T-cell (primary cell): ENCODE measurements at regions of chr17 and their contacts with region 1.

Region 1: DNA sequence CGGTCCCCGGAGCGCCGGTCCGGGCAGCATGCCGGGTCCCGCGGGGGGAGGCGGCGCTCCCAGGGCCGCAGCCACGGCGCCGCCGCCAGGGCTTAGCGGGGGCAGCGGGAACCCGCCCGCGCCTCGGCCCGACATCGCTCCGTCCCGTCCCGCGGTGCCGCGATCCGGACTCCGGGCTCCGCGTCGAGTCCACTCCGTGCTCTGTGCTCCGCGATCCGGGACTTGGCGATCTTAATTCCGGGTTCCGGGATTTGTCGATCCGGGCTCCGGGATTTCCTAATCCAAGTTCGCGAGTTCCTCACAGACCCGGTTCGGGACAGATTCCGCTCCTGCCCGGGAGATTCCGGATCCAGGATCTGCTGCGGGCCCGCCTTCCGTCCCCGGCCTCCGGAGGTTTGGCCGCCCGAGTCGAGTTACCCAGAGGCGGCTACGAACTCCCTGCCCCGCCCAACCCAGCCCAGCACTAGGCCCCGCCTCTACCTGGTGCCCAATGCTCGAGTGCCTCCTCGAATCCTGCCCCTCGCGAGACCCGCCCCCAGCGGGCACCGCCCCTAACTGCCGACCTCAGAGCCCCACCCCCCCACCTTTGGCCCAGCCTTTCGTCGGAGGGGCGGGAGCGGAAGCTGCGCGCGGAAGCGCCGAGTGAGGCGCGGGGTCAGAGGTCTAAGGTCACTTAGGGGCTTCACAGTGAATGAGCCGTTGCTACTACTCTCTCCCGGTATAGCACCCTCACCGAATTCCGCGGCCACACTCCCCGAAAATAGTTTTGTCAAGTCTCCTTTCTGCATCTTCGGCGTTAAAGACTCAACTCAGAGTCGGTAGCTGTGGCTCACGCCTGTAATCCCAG is at the start of gene SMARCD2:
- DNase-seq: peak; percentile 97 to 100 (median 99)
- ATAC-seq: peak; percentile 88 to 93 (median 91)
- H3K4me3 ChIP-seq: peak within 1 kb of the TSS; percentile 93 to 94
- H3K4me3 Mint-ChIP-seq: peak within 1 kb of the TSS; percentile 92 to 94 (median 94)
- H3K27ac ChIP-seq: peak within 1 kb of the TSS; percentile 94
- H3K27ac Mint-ChIP-seq: peak within 1 kb of the TSS; percentile 92
- H3K4me1 ChIP-seq: peaks cover 30 to 58% of the 10 kb centered on the region in 2 experiments
- H3K4me1 Mint-ChIP-seq: peaks cover 40 to 49% (median 41%) of the 10 kb centered on the region in 3 donors
- H3K27me3 ChIP-seq: no peaks in the 10 kb centered on the region
- H3K27me3 Mint-ChIP-seq: no peaks in the 10 kb centered on the region
- total RNA-seq, gene SMARCD2: 94.9 to 129 (median 121) TPM

Region 2: DNA sequence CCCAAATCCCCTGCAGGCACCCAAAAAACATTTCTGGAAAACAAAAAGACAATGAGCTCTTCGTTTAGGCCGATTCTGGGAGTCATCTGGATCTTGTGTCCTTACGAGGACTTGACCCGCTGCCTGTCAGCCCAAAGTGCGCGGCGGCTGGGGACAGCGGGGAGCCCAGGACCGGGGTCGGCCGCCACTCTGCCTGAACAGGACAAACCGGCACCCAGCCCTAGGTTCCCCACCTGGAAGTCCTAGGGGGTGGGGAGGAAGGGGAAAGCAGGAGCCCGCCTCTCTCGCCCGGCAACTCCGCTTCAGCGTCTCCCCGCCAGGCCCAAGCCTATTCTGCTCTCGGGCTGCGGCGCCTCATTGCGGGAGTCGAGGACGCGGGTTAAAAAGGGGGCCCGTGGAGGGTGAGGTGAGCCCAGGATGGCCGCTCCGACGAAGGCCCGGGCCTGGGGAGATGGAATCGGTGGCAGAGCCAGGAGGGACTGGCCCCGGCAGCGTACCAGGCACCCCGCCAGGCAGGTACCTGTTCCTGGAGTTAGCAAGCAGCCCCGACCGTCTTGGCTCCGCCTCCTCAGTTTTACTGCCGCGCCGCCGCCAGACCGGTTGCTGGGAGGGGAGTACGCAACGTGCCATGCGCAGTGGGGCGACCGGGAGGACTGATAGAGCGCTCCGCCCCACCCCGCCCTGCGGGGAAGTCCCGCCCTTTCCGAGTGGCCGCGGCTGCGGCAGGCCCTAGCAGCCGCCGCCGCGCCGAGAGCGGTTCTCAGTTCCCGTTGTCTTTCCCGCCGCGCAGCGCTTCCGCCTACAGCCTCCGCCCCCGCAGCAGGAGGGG is 101.3 kb before region 1 on chr17 and contains the start of gene STRADA:
- CTCF ChIA-PET with region 1: no interaction called
- POLR2A ChIA-PET with region 1: interaction called in 1 of 2 experiments, 10 read pairs
- DNase-seq: peak; percentile 97 to 99 (median 99)
- ATAC-seq: peak; percentile 88 to 94 (median 91)
- H3K4me3 ChIP-seq: peak within 1 kb of the TSS; percentile 95 to 99
- H3K4me3 Mint-ChIP-seq: peak within 1 kb of the TSS; percentile 92 to 95 (median 94)
- H3K27ac ChIP-seq: peak within 1 kb of the TSS; percentile 88
- H3K27ac Mint-ChIP-seq: peak within 1 kb of the TSS; percentile 86 to 96
- H3K4me1 ChIP-seq: peaks cover 6 to 25% of the 10 kb centered on the region in 2 experiments
- H3K4me1 Mint-ChIP-seq: peaks cover 19 to 26% (median 26%) of the 10 kb centered on the region in 3 donors
- H3K27me3 ChIP-seq: no peaks in the 10 kb centered on the region
- H3K27me3 Mint-ChIP-seq: no peaks in the 10 kb centered on the region
- total RNA-seq, gene STRADA: 46.9 to 58.8 (median 48.6) TPM

Region 3: GRCh38 chr17:63751806-63752205 is 91.0 kb before region 1 on chr17:
- CTCF ChIA-PET with region 1: interaction called in 1 of 2 experiments, 3 read pairs
- POLR2A ChIA-PET with region 1: interaction called in 1 of 2 experiments, 11 read pairs
- DNase-seq: peak in 19 of 35 experiments; percentile 2 to 56 (median 14)
- ATAC-seq: peak; percentile 70 to 90 (median 80)
- H3K4me3 ChIP-seq: no peak overlapping the region
- H3K4me3 Mint-ChIP-seq: peak overlapping the region in 2 of 3 donors; percentile 25 to 55
- H3K27ac ChIP-seq: peak overlapping the region; percentile 8
- H3K27ac Mint-ChIP-seq: peak overlapping the region; percentile 71 to 72
- H3K4me1 ChIP-seq: peaks cover 0 to 9% of the 10 kb centered on the region in 2 experiments
- H3K4me1 Mint-ChIP-seq: peaks cover 8 to 15% (median 13%) of the 10 kb centered on the region in 3 donors
- H3K27me3 ChIP-seq: no peaks in the 10 kb centered on the region
- H3K27me3 Mint-ChIP-seq: no peaks in the 10 kb centered on the region

Region 4: DNA sequence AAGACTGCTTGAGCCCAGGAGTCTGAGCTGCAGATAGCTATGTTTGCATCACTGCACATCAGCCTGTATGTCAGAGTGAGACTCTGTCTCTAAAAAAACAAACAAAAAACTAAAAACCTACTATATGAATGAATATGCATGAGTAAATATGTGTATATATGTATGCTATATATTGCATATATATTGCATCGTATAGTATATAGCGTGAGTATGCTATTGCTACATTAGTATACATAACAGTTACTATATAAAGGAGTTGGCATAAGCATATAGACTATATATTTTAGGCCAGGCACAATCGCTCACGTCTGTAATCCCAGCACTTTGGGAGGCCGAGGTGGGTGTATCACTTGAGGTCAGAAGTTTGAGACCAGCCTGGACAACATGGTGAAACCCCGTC is 52.7 kb before region 1 on chr17:
- CTCF ChIA-PET with region 1: no interaction called
- POLR2A ChIA-PET with region 1: no interaction called
- DNase-seq: no peak
- ATAC-seq: no peak
- H3K4me3 ChIP-seq: no peak overlapping the region
- H3K4me3 Mint-ChIP-seq: no peak overlapping the region
- H3K27ac ChIP-seq: no peak overlapping the region
- H3K27ac Mint-ChIP-seq: no peak overlapping the region
- H3K4me1 ChIP-seq: no peaks in the 10 kb centered on the region
- H3K4me1 Mint-ChIP-seq: peaks cover 0 to 8% (median 6%) of the 10 kb centered on the region in 3 donors
- H3K27me3 ChIP-seq: no peaks in the 10 kb centered on the region
- H3K27me3 Mint-ChIP-seq: no peaks in the 10 kb centered on the region